Head of caudate nucleus (tissue), 42 donors: ENCODE measurements at regions of chr12 and their contacts with region 1.

Region 1: DNA sequence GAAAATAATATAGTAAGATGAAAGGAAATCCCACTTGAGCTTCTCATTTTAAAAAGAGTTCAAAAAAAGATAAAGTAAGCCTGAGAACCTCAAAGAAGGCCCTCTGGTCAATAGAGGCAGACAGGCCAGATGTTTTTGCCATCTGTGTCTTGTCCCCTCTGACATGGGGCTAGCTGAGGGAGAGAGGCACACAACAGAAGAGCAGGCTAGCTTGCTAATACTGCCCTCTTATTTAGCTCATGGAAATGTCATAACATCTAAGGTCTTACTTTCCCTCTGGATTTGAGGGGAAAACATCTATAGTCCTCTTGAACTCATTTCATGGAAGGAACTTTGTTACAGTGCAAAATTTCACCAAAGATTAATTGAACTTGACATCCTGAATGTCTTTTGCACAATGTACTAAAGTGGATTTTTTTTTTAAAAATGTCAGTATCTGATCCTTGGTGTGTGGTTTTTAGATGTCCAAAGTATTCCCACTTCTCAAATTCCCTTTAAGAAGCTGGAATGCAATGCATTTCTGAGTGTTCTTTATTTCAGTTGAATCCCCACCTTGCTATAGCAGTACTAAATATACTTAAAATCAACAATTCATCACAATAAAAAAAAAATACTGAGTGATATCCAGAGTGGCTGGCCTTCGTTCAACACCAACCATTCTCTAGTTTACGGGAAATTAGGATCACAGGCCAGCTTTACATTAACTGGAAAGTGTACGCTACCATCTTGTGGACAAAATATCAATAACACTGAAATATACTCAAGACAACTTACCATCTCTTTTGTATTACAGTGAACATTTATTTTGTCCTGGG is 176.7 kb downstream of the PAH start:
- DNase-seq: no peak

Region 2: DNA sequence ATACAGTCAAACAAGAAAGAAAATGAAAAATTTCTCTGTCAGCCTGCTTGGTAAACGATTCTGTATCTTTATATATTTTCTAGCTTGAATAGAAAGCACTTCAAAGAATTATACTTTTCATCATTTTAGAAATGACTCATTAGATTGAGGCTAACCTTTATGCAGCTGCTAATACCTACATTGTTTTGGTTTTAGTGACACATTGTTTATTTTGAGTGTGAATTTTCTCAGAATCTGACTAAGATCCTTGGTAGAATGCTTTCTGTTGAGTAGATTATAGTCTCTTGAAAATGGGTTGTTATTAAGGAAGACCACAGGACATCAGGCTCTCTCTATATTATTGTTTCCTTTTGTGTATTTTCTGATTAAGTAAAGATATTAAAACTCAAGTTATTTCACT is 542.6 kb before region 1 on chr12 and contains the start of gene PMCH:
- intact Hi-C with region 1: loop called (anchors 10 kb)
- DNase-seq: no peak

Region 3: GRCh38 chr12:102527171-102527720 is 213.1 kb before region 1 on chr12:
- intact Hi-C with region 1: no loop called
- DNase-seq: no peak